GM10248 (cell line): ENCODE measurements at regions of chr5 and their contacts with region 1.

Region 1: DNA sequence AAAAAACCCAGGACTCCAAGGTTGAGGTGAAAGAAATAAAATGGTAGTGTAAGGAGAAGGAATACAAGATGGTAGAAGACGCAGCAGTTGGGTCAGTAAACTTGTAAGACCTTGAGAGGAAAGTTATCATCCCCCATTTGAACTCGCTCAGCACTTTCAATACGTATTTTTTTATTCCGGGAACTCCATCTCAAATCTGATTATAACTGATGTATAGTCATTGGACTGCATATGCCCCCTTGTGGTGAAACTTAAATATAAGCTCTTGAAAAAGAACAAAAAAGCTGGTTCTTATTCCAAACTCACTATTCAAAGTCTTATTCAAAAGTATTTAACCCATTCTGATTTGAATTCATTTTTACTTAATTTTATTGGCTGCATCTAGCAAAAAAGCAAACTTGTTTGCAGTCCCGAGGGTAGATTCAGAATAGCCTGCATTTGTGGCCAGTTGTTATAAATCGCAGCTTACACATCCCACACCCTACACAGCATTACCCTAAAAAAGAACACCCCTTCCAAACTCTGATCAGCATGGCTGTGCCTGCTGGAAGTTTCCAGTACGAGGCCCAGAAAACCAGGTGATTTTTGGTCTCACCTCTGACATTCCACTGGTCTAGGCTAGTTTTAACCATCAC is 118.0 kb downstream of the ESM1 start:
- DNase-seq: peak; percentile 38
- CTCF ChIP-seq: peak; percentile 36

Region 2: GRCh38 chr5:54844905-54845566 is 22.4 kb before region 1 on chr5:
- CTCF ChIA-PET with region 1: interaction called, 23 read pairs
- POLR2A ChIA-PET with region 1: no interaction called
- DNase-seq: peak; percentile 16
- CTCF ChIP-seq: peak; percentile 53

Region 3: DNA sequence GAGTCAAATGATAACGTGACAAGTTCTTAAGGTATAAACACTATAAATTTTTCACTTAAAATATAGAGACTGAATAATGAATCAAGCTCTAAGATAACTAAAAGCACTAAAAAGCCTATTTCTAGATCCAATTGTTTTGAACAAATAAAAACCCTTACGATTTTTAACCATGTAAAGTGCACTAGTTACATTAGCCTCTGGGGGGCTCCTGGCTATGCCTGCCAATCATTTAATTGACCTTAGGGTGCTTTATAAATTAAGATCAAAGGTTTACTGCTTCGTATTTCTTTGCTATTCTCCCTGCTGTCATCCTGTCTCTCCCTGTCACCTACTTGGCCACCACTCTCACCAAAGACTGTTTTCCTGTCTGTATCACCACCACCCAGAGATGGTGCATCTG is 15.4 kb before region 1 on chr5:
- CTCF ChIA-PET with region 1: interaction called, 23 read pairs
- POLR2A ChIA-PET with region 1: no interaction called
- DNase-seq: no peak
- CTCF ChIP-seq: no peak